ENCODE measurements at regions of chr2 and their contacts with region 1.

Region 1: DNA sequence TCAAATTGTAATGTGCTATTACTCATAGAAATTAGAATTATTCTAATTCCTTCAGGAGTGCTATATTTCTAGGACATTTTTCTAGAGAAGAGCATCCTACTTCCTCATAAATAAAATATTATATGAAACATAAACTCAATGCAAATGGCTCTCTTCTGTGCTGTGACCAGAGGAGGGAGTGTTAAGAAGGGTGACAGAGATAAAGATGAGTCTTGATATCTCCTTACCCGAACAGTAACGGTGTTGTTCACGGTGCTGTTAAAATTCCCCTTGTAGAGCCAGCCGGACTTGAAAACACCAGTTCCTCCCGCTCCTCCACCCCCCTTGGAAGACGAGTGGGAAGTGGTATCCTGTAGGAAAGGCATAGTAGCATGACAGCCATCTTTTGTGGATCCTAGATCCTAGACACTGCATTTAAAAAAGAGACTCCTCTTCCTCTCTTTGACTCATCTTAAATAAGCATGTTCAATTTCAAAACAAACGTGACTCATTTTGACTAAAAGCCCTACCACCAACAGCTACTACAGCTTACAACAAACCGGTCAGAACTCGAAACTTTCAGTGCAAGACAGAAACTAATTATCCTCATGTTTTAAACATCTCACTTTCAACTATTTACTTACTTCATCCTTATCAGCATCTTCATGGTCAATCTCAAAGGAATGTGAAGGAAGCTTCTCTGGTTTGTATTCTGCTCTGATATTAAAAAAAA is 156.3 kb downstream of the DOCK10 start:
- DNase-seq: no peak
- H3K4me3 Mint-ChIP-seq: no peak overlapping the region
- H3K27ac Mint-ChIP-seq: no peak overlapping the region
- H3K4me1 Mint-ChIP-seq: peaks cover 46% of the 10 kb centered on the region
- H3K27me3 Mint-ChIP-seq: no peaks in the 10 kb centered on the region
- CTCF ChIP-seq: no peak

Region 2: GRCh38 chr2:224909885-224910573 is 24.0 kb after region 1 on chr2:
- CTCF ChIA-PET with region 1: interaction called, 10 read pairs
- intact Hi-C with region 1: no loop called
- DNase-seq: peak; percentile 76
- H3K4me3 Mint-ChIP-seq: no peak overlapping the region
- H3K27ac Mint-ChIP-seq: peak overlapping the region; percentile 63
- H3K4me1 Mint-ChIP-seq: peaks cover 18% of the 10 kb centered on the region
- H3K27me3 Mint-ChIP-seq: no peaks in the 10 kb centered on the region
- CTCF ChIP-seq: no peak

Region 3: DNA sequence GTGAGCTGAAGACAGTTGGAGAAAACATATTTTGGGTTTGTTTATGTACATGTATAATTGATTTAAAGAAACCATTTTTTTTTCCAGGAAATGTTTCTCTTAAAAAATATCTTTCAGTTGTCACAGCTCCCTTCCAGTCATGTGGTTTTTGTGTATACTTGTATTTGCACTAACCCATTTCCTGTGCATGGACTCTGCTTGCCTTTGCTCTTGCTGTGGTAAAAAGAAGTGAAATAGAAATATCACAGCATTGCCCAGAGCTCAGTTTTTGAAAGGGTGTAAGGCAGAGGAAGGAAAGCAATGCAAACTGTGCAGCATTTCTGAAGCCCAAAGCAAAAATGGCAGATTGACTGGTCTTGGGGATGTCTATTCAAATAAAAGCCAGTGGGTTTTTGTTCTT is 166.7 kb after region 1 on chr2:
- CTCF ChIA-PET with region 1: no interaction called
- intact Hi-C with region 1: no loop called
- DNase-seq: no peak
- H3K4me3 Mint-ChIP-seq: no peak overlapping the region
- H3K27ac Mint-ChIP-seq: no peak overlapping the region
- H3K4me1 Mint-ChIP-seq: no peaks in the 10 kb centered on the region
- H3K27me3 Mint-ChIP-seq: no peaks in the 10 kb centered on the region
- CTCF ChIP-seq: no peak